ENCODE measurements at regions of chr1 and their contacts with region 1.

Region 1: DNA sequence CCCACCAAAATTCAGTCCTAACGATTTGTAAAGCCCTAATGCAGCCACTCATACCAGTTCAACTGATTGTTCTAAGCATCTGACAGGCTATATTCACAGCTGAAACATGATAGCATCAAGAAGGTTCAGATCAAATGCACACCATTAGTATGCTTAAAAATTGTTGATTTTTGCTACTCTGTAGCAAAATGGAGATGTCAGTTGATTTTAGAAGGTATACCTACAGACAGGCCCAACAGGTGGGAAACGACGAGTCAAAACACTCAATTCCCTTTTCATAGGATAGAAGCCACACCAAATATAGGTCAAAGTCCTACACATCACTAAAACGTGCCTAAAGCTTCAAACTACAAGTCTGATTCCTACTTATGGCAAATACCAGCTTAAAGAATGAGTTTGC is 6.7 kb downstream of the SFPQ start:
- H3K4me3 ChIP-seq: no peak overlapping the region
- H3K27ac ChIP-seq: no peak overlapping the region
- H3K4me1 ChIP-seq: no peaks in the 10 kb centered on the region; the same call in 1 of the 2 replicates
- CTCF ChIP-seq: no peak

Region 2: GRCh38 chr1:35202048-35202719 is 15.9 kb after region 1 on chr1:
- CTCF ChIA-PET with region 1: interaction called, 12 read pairs
- POLR2A ChIA-PET with region 1: interaction called, 5 read pairs
- H3K4me3 ChIP-seq: no peak overlapping the region
- H3K27ac ChIP-seq: no peak overlapping the region
- H3K4me1 ChIP-seq: no peaks in the 10 kb centered on the region
- CTCF ChIP-seq: peak; percentile 78

Measured in HEK293 (cell line).